ENCODE measurements at regions of chr4 and their contacts with region 1.

Region 1: GRCh38 chr4:141654098-141654497 is 17.7 kb downstream of the IL15 start:
- DNase-seq: peak; percentile 19 to 69
- H3K4me3 ChIP-seq: no peak overlapping the region
- H3K27ac ChIP-seq: no peak overlapping the region
- H3K4me1 ChIP-seq: no peaks in the 10 kb centered on the region
- H3K27me3 ChIP-seq: no peaks in the 10 kb centered on the region
- CTCF ChIP-seq: peak; percentile 64 to 83 (median 83)
- EP300 ChIP-seq: no peak
- POLR2A ChIP-seq: no peak
- RAD21 ChIP-seq: peak; percentile 66 to 71

Region 2: DNA sequence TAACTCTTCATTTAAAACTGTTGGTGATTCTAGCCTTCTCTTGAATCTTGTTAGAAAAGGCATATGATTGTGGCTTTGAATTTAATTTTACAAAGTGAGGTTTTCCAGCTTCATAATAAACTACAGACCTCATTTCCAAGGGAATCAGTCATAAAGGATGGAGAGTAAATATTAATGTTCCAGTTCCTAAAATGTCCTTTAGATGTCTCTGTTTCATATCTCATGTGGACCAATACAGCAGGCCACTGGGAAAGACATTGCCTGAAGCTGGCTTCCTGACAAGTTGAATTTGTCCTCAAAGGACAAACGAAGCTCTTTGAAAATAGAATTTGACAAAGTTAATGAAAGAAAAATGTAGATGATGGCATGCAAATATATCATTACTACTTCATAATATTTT is 308.0 kb before region 1 on chr4:
- CTCF ChIA-PET with region 1: interaction called, 14 read pairs
- POLR2A ChIA-PET with region 1: no interaction called
- DNase-seq: no peak
- H3K4me3 ChIP-seq: no peak overlapping the region
- H3K27ac ChIP-seq: no peak overlapping the region
- H3K4me1 ChIP-seq: no peaks in the 10 kb centered on the region
- H3K27me3 ChIP-seq: no peaks in the 10 kb centered on the region
- CTCF ChIP-seq: peak in 1 of 3 experiments; percentile 17; a peak in 1 of 4 replicates
- EP300 ChIP-seq: no peak
- POLR2A ChIP-seq: no peak
- RAD21 ChIP-seq: peak; percentile 62 to 64

Region 3: GRCh38 chr4:141636082-141636770 is 17.9 kb before region 1 on chr4 and contains the start of gene IL15:
- CTCF ChIA-PET with region 1: interaction called, 12 read pairs
- POLR2A ChIA-PET with region 1: no interaction called
- DNase-seq: peak; percentile 50 to 79
- H3K4me3 ChIP-seq: peak within 1 kb of the TSS; percentile 46 to 85 (median 68)
- H3K27ac ChIP-seq: no peak within 1 kb of the TSS
- H3K4me1 ChIP-seq: peaks cover 0 to 4% (median under 1%) of the 10 kb centered on the region in 4 experiments; a peak in 2 of 7 replicates
- H3K27me3 ChIP-seq: peaks cover 1 to 20% (median 14%) of the 10 kb centered on the region in 4 experiments; a peak in 6 of 7 replicates
- CTCF ChIP-seq: no peak
- EP300 ChIP-seq: no peak
- POLR2A ChIP-seq: no peak
- RAD21 ChIP-seq: no peak
- total RNA-seq, gene IL15: 0.61 and 0.69 TPM in 2 replicates

Region 4: DNA sequence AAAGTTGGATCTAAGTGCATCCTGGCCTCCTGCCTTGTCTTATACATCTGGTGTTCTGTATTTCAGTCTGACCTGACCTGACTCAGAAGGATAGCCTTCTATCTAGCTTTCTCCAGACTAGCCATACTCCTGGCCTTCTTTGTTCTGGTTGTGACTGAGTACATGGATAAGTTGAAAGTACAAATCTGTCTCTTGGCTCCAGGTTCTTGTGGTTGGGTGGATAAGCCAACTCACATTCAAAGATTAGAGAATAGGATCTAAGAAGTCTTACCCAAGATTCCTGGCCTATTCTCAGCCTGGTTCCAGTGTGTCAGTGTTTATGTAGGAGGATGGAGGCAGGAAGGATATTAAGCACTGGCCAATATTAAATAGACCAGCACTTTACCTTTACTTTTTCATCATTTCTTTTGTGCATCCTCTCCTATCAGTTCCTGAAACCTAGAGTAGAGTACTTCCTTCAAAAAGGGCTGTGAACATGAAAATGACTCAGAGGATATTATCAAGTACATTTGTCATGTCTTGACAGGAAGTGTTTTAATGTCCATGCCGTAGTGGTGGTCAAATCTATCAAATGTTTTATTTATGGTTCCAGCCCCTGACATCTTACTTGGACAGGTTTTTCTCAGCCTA is 105.8 kb after region 1 on chr4:
- CTCF ChIA-PET with region 1: no interaction called
- POLR2A ChIA-PET with region 1: no interaction called
- DNase-seq: no peak
- H3K4me3 ChIP-seq: no peak overlapping the region
- H3K27ac ChIP-seq: no peak overlapping the region
- H3K4me1 ChIP-seq: peaks cover 0 to 6% (median 0%) of the 10 kb centered on the region in 4 experiments; a peak in 1 of 7 replicates
- H3K27me3 ChIP-seq: no peaks in the 10 kb centered on the region
- CTCF ChIP-seq: no peak
- EP300 ChIP-seq: no peak
- POLR2A ChIP-seq: no peak
- RAD21 ChIP-seq: no peak

Region 5: DNA sequence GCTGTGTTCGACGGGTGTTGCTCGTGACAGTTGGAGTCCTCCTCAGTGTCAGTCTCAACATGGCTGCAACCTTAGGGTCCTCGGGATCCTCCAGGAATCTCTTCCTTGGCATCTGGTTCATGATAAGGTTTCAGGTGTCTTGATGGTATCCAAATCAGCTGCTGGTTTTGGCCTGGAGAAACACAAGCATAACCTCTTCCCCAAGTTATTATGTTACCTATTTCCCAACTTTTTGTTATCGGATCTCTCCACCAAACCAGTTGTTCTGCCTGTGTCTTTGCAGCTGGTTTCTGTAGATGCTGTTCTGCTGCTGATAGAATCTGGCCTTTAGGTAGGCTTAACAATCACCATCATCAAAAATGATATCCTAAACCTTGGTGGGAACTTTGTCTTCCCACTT is 285.3 kb after region 1 on chr4:
- CTCF ChIA-PET with region 1: no interaction called
- POLR2A ChIA-PET with region 1: no interaction called
- DNase-seq: no peak
- H3K4me3 ChIP-seq: no peak overlapping the region
- H3K27ac ChIP-seq: no peak overlapping the region
- H3K4me1 ChIP-seq: no peaks in the 10 kb centered on the region
- H3K27me3 ChIP-seq: no peaks in the 10 kb centered on the region
- CTCF ChIP-seq: no peak
- EP300 ChIP-seq: no peak
- POLR2A ChIP-seq: no peak
- RAD21 ChIP-seq: no peak

Measured in H1 (cell line).